ENCODE measurements at regions of chr3 and their contacts with region 1.

Region 1: GRCh38 chr3:119950666-119951325 is 143.5 kb downstream of the GSK3B start:
- DNase-seq: no peak
- CTCF ChIP-seq: no peak

Region 2: GRCh38 chr3:119918992-119919933 is 31.5 kb before region 1 on chr3:
- CTCF ChIA-PET with region 1: no interaction called
- POLR2A ChIA-PET with region 1: no interaction called
- DNase-seq: no peak
- CTCF ChIP-seq: no peak

Region 3: GRCh38 chr3:119965692-119966091 is 14.9 kb after region 1 on chr3:
- CTCF ChIA-PET with region 1: interaction called, 11 read pairs
- POLR2A ChIA-PET with region 1: no interaction called
- DNase-seq: no peak
- CTCF ChIP-seq: no peak